Endothelial cell of umbilical vein (primary cell): ENCODE measurements at regions of chr6 and their contacts with region 1.

Region 1: DNA sequence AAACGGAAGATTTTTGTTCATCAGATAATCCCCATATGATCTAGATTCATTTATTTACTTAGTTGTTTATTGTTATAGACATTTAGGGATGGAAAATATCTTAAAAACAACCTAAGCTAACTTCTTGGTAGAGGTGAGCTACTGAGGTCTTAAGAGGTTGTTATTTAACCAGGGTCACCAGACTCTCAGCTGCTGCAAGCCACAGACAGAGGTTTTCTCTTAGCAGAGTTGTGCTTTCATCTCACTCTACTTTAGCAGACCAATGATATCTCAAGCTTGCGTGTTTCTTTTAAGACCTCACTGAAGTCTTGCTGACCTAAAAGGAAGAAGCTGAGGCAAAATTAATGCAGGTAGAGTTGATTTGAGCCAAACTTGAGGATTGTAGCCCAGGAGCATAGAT is 43.6 kb downstream of the NCOA7 start:
- DNase-seq: peak; percentile 50
- H3K4me3 ChIP-seq: no peak overlapping the region
- H3K27ac ChIP-seq: no peak overlapping the region
- H3K4me1 ChIP-seq: peaks cover 28% of the 10 kb centered on the region
- H3K27me3 ChIP-seq: no peaks in the 10 kb centered on the region
- CTCF ChIP-seq: no peak
- POLR2A ChIP-seq: no peak

Region 2: GRCh38 chr6:125858427-125859320 is 24.3 kb after region 1 on chr6:
- CTCF ChIA-PET with region 1: interaction called, 11 read pairs
- POLR2A ChIA-PET with region 1: no interaction called
- dilution Hi-C with region 1: no loop called
- intact Hi-C with region 1: no loop called
- DNase-seq: peak; percentile 68
- H3K4me3 ChIP-seq: no peak overlapping the region
- H3K27ac ChIP-seq: no peak overlapping the region
- H3K4me1 ChIP-seq: no peaks in the 10 kb centered on the region
- H3K27me3 ChIP-seq: no peaks in the 10 kb centered on the region
- CTCF ChIP-seq: peak; percentile 69 to 73
- POLR2A ChIP-seq: no peak